HCT116 (cell line): ENCODE measurements at regions of chr17 and their contacts with region 1.

Region 1: GRCh38 chr17:57946798-57947358 is 8.3 kb downstream of the CUEDC1 start:
- DNase-seq: no peak
- ATAC-seq: no peak
- H3K4me3 ChIP-seq: peak overlapping the region; percentile 21 to 48
- H3K27ac ChIP-seq: peak overlapping the region; percentile 97
- H3K4me1 ChIP-seq: peaks cover 90 to 98% of the 10 kb centered on the region in 2 experiments
- H3K27me3 ChIP-seq: no peaks in the 10 kb centered on the region
- CTCF ChIP-seq: no peak
- POLR2A ChIP-seq: no peak
- RAD21 ChIP-seq: no peak

Region 2: GRCh38 chr17:57868007-57868909 is 78.6 kb before region 1 on chr17:
- CTCF ChIA-PET with region 1: no interaction called
- POLR2A ChIA-PET with region 1: interaction called, 10 read pairs
- RAD21 ChIA-PET with region 1: no interaction called
- intact Hi-C with region 1: loop called (anchors 2 kb)
- DNase-seq: peak; percentile 90
- ATAC-seq: peak; percentile 85
- H3K4me3 ChIP-seq: peak overlapping the region; percentile 6 to 41; a peak in 3 of 4 replicates
- H3K27ac ChIP-seq: peak overlapping the region; percentile 77
- H3K4me1 ChIP-seq: peaks cover 47 to 88% of the 10 kb centered on the region in 2 experiments
- H3K27me3 ChIP-seq: no peaks in the 10 kb centered on the region
- CTCF ChIP-seq: peak in 2 of 3 experiments; percentile 74 to 77; a peak in 4 of 6 replicates
- POLR2A ChIP-seq: no peak
- RAD21 ChIP-seq: no peak

Region 3: GRCh38 chr17:58121925-58122324 is 175.0 kb after region 1 on chr17:
- CTCF ChIA-PET with region 1: no interaction called
- POLR2A ChIA-PET with region 1: no interaction called
- RAD21 ChIA-PET with region 1: no interaction called
- intact Hi-C with region 1: no loop called
- DNase-seq: peak; percentile 59
- ATAC-seq: peak; percentile 86
- H3K4me3 ChIP-seq: no peak overlapping the region
- H3K27ac ChIP-seq: no peak overlapping the region
- H3K4me1 ChIP-seq: no peaks in the 10 kb centered on the region
- H3K27me3 ChIP-seq: peaks cover 31% of the 10 kb centered on the region
- CTCF ChIP-seq: peak; percentile 55 to 93 (median 73)
- POLR2A ChIP-seq: no peak
- RAD21 ChIP-seq: peak; percentile 89

Region 4: GRCh38 chr17:58200017-58200633 is 253.2 kb after region 1 on chr17:
- CTCF ChIA-PET with region 1: no interaction called
- POLR2A ChIA-PET with region 1: no interaction called
- RAD21 ChIA-PET with region 1: no interaction called
- intact Hi-C with region 1: no loop called
- DNase-seq: peak; percentile 63
- ATAC-seq: peak; percentile 98
- H3K4me3 ChIP-seq: no peak overlapping the region
- H3K27ac ChIP-seq: no peak overlapping the region
- H3K4me1 ChIP-seq: peaks cover 0 to 3% of the 10 kb centered on the region in 2 experiments; a peak in 1 of 4 replicates
- H3K27me3 ChIP-seq: no peaks in the 10 kb centered on the region; the same call in 1 of the 2 replicates
- CTCF ChIP-seq: peak; percentile 58 to 90 (median 88)
- POLR2A ChIP-seq: no peak
- RAD21 ChIP-seq: no peak; the same call in 1 of the 2 replicates

Region 5: DNA sequence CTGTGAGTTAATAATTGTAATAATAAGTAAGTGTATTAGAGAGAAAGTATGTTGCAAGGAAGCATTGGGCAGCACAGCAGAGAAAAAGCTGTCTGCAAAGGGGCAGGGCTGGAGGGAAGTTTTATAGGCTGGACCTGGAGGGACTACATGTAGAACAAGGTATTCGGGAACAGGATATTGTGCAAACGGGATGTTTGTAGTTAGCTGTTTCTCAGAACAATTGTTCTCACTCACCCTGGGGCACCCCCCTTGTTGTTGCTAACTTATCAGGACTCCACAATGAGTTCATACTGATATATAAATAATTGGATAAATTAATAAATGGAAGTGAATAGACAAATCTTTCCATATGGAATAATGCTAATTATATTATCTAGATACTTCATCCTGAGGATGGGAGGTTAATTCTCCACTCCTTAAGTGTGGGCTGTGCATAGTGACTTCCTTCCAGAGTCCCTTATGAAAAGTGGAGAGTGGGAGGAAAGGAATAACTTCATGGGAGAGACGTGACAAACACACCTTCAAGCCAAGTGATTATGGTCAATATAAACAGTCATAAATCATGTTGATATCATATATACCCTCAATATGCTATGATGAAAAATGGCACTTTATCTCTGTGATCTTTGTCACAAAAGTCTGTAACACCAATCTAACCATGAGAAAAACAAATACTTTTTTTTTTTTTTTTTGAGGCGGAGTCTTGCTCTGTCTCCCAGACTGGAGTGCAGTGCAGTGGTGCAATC is 894.1 kb after region 1 on chr17:
- CTCF ChIA-PET with region 1: no interaction called
- POLR2A ChIA-PET with region 1: no interaction called
- RAD21 ChIA-PET with region 1: no interaction called
- intact Hi-C with region 1: no loop called
- DNase-seq: no peak
- ATAC-seq: no peak
- H3K4me3 ChIP-seq: no peak overlapping the region
- H3K27ac ChIP-seq: no peak overlapping the region
- H3K4me1 ChIP-seq: no peaks in the 10 kb centered on the region
- H3K27me3 ChIP-seq: no peaks in the 10 kb centered on the region
- CTCF ChIP-seq: no peak
- POLR2A ChIP-seq: no peak
- RAD21 ChIP-seq: no peak